ENCODE measurements at regions of chrX and their contacts with region 1.

Region 1: GRCh38 chrX:56802921-56803849 is 74.1 kb downstream of the NBDY start:
- DNase-seq: peak; percentile 44
- CTCF ChIP-seq: peak; percentile 60

Region 2: DNA sequence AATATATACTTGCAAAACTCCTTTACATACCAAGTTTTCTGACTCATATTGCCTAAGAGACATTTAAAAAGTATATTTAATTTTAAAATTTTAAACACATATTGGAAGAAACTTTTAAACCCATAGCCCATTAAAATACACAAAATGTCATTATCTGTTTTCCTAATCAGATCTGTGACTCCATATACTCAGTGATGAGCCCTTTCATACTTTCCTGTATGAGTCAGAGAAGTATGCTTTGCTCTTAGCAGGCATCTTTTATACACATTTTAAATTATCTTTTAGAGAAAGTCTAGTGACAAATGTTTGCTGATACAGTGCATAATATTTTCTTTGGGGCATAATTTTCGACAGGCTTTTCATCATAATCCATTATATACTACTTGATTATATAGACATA is 165.8 kb after region 1 on chrX:
- in situ Hi-C with region 1: loop called (anchors 25 kb)
- DNase-seq: no peak
- CTCF ChIP-seq: no peak

Region 3: DNA sequence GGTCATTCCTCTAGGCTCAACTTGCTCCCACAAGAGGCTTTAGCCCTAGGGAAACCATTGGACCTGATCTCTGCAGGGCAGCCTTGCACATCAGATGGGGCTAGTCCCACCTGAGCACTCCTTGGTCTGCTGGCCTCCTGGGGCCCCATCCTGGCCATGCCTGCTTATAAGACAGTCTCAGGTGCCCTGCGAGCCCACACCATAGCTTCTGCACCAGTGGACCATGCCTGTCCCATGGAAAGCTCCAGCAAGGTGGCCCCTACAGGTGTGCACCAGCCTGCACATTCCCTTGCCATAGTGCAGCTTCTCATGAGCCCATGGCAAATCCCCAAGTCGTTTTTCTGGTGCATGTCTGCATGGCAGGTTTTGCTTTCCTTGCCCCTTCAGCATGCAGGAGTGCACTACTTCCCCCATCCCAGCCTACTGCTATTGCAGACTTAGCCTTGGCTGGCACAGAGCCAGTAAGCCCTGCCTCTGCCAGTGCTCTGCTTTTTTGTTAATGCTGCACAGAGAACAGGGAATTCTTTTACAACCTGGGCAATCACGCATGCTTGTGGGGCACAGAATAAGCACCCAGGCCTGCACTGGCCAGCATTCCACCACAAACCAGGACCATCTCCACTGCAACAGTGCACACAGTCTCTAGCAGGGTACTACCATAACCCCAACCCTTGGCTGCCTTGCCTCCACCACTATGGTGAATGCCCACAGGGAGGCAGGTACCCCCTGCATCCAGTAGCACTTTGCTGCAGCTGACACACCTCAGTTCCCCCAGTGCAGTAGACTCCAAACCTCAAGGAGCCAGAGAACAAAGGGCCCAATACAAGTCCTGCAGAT is 463.9 kb after region 1 on chrX:
- in situ Hi-C with region 1: no loop called
- DNase-seq: no peak
- CTCF ChIP-seq: no peak

Region 4: DNA sequence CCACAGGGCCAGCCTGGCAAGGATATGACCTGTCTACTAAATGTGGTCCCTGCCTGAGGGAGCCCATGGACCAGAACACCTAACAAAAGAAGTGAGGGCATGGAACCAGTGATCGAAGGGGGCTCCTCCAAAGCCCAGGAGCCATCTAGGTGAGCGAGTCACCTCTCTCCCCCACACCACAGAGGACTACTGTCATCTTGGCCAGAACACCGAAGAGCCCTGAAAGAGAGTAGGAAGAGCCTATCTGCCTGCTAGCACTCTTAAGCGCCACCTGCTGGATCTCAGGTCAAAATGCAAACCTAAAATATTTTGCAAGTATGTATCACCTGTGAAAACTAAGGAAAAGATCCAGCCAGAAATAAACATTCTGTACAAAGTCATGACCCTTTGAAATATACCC is 650.7 kb after region 1 on chrX:
- in situ Hi-C with region 1: loop called (anchors 25 kb)
- DNase-seq: peak; percentile 31
- CTCF ChIP-seq: peak; percentile 76

Measured in GM13977 (cell line).